IMR-90 (cell line): ENCODE measurements at regions of chr6 and their contacts with region 1.

Region 1: GRCh38 chr6:148578245-148578732 is 168.5 kb upstream of the UST start:
- DNase-seq: peak; percentile 80
- ATAC-seq: peak; percentile 100
- H3K4me3 ChIP-seq: no peak overlapping the region
- H3K27ac ChIP-seq: no peak overlapping the region
- H3K4me1 ChIP-seq: peaks cover 1% of the 10 kb centered on the region; the same call in 1 of the 2 replicates
- H3K27me3 ChIP-seq: no peaks in the 10 kb centered on the region
- CTCF ChIP-seq: peak; percentile 99
- POLR2A ChIP-seq: no peak
- RAD21 ChIP-seq: peak; percentile 95

Region 2: DNA sequence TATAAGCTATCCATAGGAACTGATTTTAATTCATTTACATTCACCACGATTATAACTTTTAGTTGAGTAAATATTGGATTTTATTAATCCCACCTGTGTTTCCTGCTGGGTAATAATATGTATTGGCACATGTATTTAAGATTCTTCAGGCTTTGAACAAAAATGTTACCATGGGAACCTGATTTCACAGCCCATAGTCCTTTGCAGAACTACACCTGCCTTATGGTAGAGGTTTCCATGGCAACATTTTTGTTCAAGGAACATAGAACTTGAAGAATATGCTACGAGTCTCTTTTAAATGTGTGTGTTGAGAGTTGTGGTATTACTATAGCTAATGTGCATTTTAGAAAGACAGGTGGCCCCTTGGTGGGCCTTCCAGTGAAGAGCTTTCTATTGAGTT is 752.4 kb before region 1 on chr6:
- CTCF ChIA-PET with region 1: no interaction called
- POLR2A ChIA-PET with region 1: no interaction called
- dilution Hi-C with region 1: no loop called
- in situ Hi-C with region 1: no loop called
- intact Hi-C with region 1: no loop called
- DNase-seq: no peak
- ATAC-seq: no peak
- H3K4me3 ChIP-seq: no peak overlapping the region
- H3K27ac ChIP-seq: no peak overlapping the region
- H3K4me1 ChIP-seq: no peaks in the 10 kb centered on the region
- H3K27me3 ChIP-seq: 0 out of 2 replicates have a peak, but pooled peaks cover 2% of the 10 kb centered on the region
- CTCF ChIP-seq: no peak
- POLR2A ChIP-seq: no peak
- RAD21 ChIP-seq: no peak

Region 3: GRCh38 chr6:148464319-148465010 is 113.8 kb before region 1 on chr6:
- CTCF ChIA-PET with region 1: no interaction called
- POLR2A ChIA-PET with region 1: no interaction called
- dilution Hi-C with region 1: no loop called
- in situ Hi-C with region 1: no loop called
- intact Hi-C with region 1: no loop called
- DNase-seq: peak; percentile 79
- ATAC-seq: peak; percentile 59
- H3K4me3 ChIP-seq: no peak overlapping the region
- H3K27ac ChIP-seq: peak overlapping the region; percentile 5; the same call in 1 of the 2 replicates
- H3K4me1 ChIP-seq: peaks cover 19% of the 10 kb centered on the region
- H3K27me3 ChIP-seq: no peaks in the 10 kb centered on the region
- CTCF ChIP-seq: peak; percentile 98
- POLR2A ChIP-seq: no peak
- RAD21 ChIP-seq: peak; percentile 91

Region 4: GRCh38 chr6:148608199-148608951 is 30.1 kb after region 1 on chr6:
- CTCF ChIA-PET with region 1: interaction called, 10 read pairs
- POLR2A ChIA-PET with region 1: no interaction called
- dilution Hi-C with region 1: no loop called
- in situ Hi-C with region 1: no loop called
- intact Hi-C with region 1: loop called (anchors 2 kb)
- DNase-seq: peak; percentile 19
- ATAC-seq: peak; percentile 53; the same call in 1 of the 2 replicates
- H3K4me3 ChIP-seq: no peak overlapping the region
- H3K27ac ChIP-seq: no peak overlapping the region
- H3K4me1 ChIP-seq: peaks cover 2% of the 10 kb centered on the region; the same call in 1 of the 2 replicates
- H3K27me3 ChIP-seq: no peaks in the 10 kb centered on the region; the same call in 1 of the 2 replicates
- CTCF ChIP-seq: peak; percentile 46
- POLR2A ChIP-seq: no peak
- RAD21 ChIP-seq: peak; percentile 51

Region 5: GRCh38 chr6:148835920-148836441 is 257.7 kb after region 1 on chr6:
- CTCF ChIA-PET with region 1: no interaction called
- POLR2A ChIA-PET with region 1: no interaction called
- dilution Hi-C with region 1: no loop called
- in situ Hi-C with region 1: no loop called
- intact Hi-C with region 1: loop called (anchors 10 kb)
- DNase-seq: peak; percentile 96
- ATAC-seq: peak; percentile 71
- H3K4me3 ChIP-seq: no peak overlapping the region
- H3K27ac ChIP-seq: no peak overlapping the region
- H3K4me1 ChIP-seq: peaks cover 6% of the 10 kb centered on the region
- H3K27me3 ChIP-seq: no peaks in the 10 kb centered on the region
- CTCF ChIP-seq: no peak
- POLR2A ChIP-seq: no peak
- RAD21 ChIP-seq: no peak

Region 6: DNA sequence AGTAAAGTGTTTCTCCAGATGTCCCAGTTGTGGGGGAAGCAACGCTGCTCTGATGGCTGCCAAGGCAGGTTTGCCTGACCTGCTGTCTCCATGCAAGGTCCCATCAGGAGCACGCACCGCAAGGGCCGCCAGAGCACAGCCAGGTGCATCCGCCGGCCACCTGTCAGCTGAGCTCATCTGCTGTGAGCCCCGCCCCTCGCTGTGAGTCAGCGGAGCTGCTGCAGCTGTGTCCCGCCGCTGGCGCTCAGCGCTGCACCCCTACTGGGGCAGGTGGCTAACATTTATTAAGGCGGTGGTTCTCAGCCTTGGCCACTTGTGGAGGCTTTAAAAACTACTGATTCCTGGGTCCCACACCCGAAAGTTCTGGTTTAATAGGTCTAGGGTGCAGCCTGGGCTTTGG is 394.2 kb after region 1 on chr6:
- CTCF ChIA-PET with region 1: interaction called, 10 read pairs
- POLR2A ChIA-PET with region 1: no interaction called
- dilution Hi-C with region 1: no loop called
- in situ Hi-C with region 1: no loop called
- intact Hi-C with region 1: loop called (anchors 5 kb)
- DNase-seq: no peak
- ATAC-seq: no peak
- H3K4me3 ChIP-seq: no peak overlapping the region
- H3K27ac ChIP-seq: no peak overlapping the region
- H3K4me1 ChIP-seq: peaks cover 28% of the 10 kb centered on the region
- H3K27me3 ChIP-seq: no peaks in the 10 kb centered on the region
- CTCF ChIP-seq: no peak
- POLR2A ChIP-seq: no peak
- RAD21 ChIP-seq: no peak

Region 7: GRCh38 chr6:149082286-149082707 is 504.0 kb after region 1 on chr6:
- CTCF ChIA-PET with region 1: interaction called, 6 read pairs
- POLR2A ChIA-PET with region 1: no interaction called
- dilution Hi-C with region 1: no loop called
- in situ Hi-C with region 1: no loop called
- intact Hi-C with region 1: loop called (anchors 2 kb)
- DNase-seq: peak; percentile 75
- ATAC-seq: peak; percentile 50
- H3K4me3 ChIP-seq: no peak overlapping the region
- H3K27ac ChIP-seq: no peak overlapping the region
- H3K4me1 ChIP-seq: peaks cover 13% of the 10 kb centered on the region
- H3K27me3 ChIP-seq: peaks cover 5% of the 10 kb centered on the region
- CTCF ChIP-seq: peak; percentile 79
- POLR2A ChIP-seq: no peak
- RAD21 ChIP-seq: peak; percentile 82

Region 8: GRCh38 chr6:149513915-149514314 is 935.6 kb after region 1 on chr6:
- CTCF ChIA-PET with region 1: no interaction called
- POLR2A ChIA-PET with region 1: no interaction called
- dilution Hi-C with region 1: no loop called
- in situ Hi-C with region 1: loop called (anchors 10 kb)
- intact Hi-C with region 1: loop called (anchors 10 kb)
- DNase-seq: no peak
- ATAC-seq: no peak
- H3K4me3 ChIP-seq: no peak overlapping the region
- H3K27ac ChIP-seq: no peak overlapping the region
- H3K4me1 ChIP-seq: no peaks in the 10 kb centered on the region
- H3K27me3 ChIP-seq: no peaks in the 10 kb centered on the region
- CTCF ChIP-seq: no peak
- POLR2A ChIP-seq: no peak
- RAD21 ChIP-seq: no peak